Activated T-helper 1 cell treated with anti-CD3 and anti-CD28 coated beads, Interleukin-12 subunit alpha, Interleukin-12 subunit beta, Interleukin-2, Interleukin-4 antibody, amounts not matched to agents 30 ng/mL and 10 ng/mL and 1 ng/mL, durations not matched to agents 14 hours and 24 hours and 36 hours (primary cell): ENCODE measurements at regions of chr12 and their contacts with region 1.

Region 1: DNA sequence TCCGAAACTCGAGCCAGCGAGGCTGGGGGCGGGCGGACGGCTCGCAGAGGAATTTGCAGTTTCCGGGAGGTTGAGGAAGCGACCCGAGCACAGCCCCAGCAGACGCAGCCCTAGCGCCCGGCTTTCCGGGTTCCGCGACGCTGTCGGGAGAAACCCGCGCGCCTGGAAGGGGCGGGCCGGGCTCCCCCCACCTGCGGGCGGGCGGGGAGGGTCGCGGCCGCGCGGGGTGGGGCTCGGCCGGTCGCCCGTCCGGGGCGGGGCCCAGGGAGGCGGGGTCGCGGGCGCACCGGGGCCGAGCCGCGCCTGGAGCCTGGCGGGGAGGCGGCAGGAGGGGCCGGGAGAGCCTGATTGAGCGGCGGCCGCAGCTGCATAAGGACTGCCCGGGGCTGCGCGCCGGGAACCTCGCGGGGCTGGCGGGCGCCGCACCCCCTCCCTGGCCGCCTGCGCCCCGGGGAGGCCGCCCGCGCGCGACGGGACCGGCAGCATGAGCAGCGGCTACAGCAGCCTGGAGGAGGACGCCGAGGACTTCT is at the start of gene RASSF3:
- DNase-seq: peak; percentile 76
- H3K4me3 Mint-ChIP-seq: peak within 1 kb of the TSS; percentile 97
- H3K27ac Mint-ChIP-seq: peak within 1 kb of the TSS; percentile 98
- H3K4me1 Mint-ChIP-seq: peaks cover 47% of the 10 kb centered on the region
- H3K27me3 Mint-ChIP-seq: no peaks in the 10 kb centered on the region
- total RNA-seq, gene RASSF3: 37.1 and 38.3 TPM in 2 replicates

Region 2: GRCh38 chr12:64222009-64222765 is 388.0 kb before region 1 on chr12 and contains the start of gene KICS2:
- intact Hi-C with region 1: loop called (anchors 2 kb)
- DNase-seq: peak; percentile 88
- H3K4me3 Mint-ChIP-seq: peak within 1 kb of the TSS; percentile 100
- H3K27ac Mint-ChIP-seq: peak within 1 kb of the TSS; percentile 100
- H3K4me1 Mint-ChIP-seq: peaks cover 33% of the 10 kb centered on the region
- H3K27me3 Mint-ChIP-seq: peaks cover 14% of the 10 kb centered on the region
- total RNA-seq, gene KICS2: 12.7 and 14.9 TPM in 2 replicates

Region 3: GRCh38 chr12:64433915-64434314 is 176.3 kb before region 1 on chr12:
- intact Hi-C with region 1: no loop called
- DNase-seq: no peak
- H3K4me3 Mint-ChIP-seq: no peak overlapping the region
- H3K27ac Mint-ChIP-seq: no peak overlapping the region
- H3K4me1 Mint-ChIP-seq: no peaks in the 10 kb centered on the region
- H3K27me3 Mint-ChIP-seq: no peaks in the 10 kb centered on the region

Region 4: GRCh38 chr12:64451687-64452558 is 158.3 kb before region 1 on chr12 and contains the start of gene TBK1:
- intact Hi-C with region 1: loop called (anchors 2 kb)
- DNase-seq: peak; percentile 74
- H3K4me3 Mint-ChIP-seq: peak within 1 kb of the TSS; percentile 97
- H3K27ac Mint-ChIP-seq: peak within 1 kb of the TSS; percentile 94
- H3K4me1 Mint-ChIP-seq: peaks cover 47% of the 10 kb centered on the region
- H3K27me3 Mint-ChIP-seq: no peaks in the 10 kb centered on the region
- total RNA-seq, gene TBK1: 33.6 and 42.4 TPM in 2 replicates

Region 5: DNA sequence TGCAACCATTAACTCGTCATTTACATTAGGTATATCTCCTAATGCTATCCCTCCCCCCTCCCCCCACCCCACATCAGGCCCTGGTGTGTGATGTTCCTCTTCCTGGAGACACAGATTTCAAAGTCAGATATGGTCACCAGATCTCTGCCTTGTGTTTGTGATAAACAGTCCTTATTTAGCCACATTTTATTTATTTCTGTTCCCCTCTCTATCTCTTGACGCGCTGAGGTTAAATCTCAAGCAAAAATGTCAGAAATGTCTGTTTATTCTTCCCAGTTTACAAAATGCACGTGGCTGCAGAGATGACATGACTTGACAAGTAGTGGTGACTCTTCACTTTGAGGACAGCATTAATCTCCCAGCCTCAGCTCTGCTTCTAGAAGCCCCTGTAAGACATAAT is 11.4 kb before region 1 on chr12:
- intact Hi-C with region 1: loop called (anchors 1 kb)
- DNase-seq: no peak
- H3K4me3 Mint-ChIP-seq: no peak overlapping the region
- H3K27ac Mint-ChIP-seq: no peak overlapping the region
- H3K4me1 Mint-ChIP-seq: peaks cover 20% of the 10 kb centered on the region
- H3K27me3 Mint-ChIP-seq: peaks cover 8% of the 10 kb centered on the region

Region 6: GRCh38 chr12:64660237-64661018 is 50.2 kb after region 1 on chr12:
- intact Hi-C with region 1: loop called (anchors 2 kb)
- DNase-seq: no peak
- H3K4me3 Mint-ChIP-seq: no peak overlapping the region
- H3K27ac Mint-ChIP-seq: no peak overlapping the region
- H3K4me1 Mint-ChIP-seq: peaks cover 61% of the 10 kb centered on the region
- H3K27me3 Mint-ChIP-seq: no peaks in the 10 kb centered on the region

Region 7: DNA sequence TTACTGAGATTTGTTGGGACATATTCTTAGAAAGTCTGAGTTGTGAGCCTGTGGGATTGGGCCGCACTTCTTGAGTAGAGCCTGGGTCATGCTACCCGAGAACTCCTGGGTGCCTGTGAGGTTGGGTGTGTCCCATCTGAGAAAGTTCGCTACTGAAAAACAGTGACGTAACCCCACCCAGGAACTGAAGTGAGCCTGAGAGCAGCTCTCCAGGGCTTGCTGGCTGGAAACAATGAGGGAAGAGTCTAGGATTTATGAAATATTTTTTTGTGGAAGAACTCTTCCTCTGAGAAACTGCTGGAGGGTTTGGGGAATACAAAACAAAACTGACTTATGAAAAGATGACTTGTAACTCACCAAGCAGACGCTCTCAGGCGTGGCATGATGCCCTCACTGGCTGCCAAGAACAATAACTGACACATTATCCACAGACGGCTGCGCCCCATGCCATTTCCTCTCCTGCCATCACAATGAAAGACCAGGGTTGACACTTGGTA is 69.3 kb after region 1 on chr12:
- intact Hi-C with region 1: loop called (anchors 1 kb)
- DNase-seq: peak; percentile 51
- H3K4me3 Mint-ChIP-seq: peak overlapping the region; percentile 53
- H3K27ac Mint-ChIP-seq: peak overlapping the region; percentile 84
- H3K4me1 Mint-ChIP-seq: peaks cover 82% of the 10 kb centered on the region
- H3K27me3 Mint-ChIP-seq: no peaks in the 10 kb centered on the region

Region 8: DNA sequence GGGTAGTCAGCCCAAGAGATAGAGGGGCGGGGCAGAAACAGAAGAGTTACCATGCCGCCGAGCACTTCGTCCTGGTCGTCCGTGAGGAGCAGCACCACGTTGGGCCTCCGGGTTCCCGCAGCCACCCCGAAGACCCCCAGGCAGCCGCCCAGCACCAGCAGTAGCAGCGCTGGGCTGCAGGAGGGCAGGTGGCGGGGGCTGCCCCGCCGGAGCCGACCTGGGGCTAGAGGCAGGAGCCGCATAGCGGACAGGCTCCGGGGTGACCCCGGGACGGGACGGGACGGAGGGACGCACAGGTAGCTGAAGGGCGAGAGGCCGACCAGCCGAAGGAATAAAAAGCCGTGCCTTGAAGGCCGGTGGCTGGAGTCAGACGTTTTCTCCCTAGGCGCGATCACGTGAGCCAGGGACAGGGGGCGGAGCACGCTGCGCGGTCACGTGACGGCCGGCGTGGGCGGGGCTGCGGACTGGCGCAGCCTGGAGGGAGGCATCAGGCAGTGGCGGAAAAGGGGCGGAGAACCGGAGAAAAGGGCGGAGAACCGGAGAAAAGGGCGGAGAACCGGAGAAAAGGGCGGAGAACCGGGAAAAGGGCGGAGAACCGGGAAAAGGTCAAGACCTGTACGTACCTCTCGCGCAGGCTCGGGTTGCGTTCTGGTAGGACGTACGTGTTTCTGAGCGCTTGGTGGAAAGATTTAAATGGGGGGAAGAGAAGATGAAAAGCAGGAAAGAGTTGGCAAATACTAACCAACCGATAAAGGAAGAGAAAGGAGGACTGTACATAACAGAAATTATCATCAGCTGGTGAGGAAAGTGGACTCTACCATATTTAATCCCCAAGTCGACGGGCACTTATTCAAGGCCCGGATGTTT is 149.1 kb after region 1 on chr12 and contains the start of gene GNS:
- intact Hi-C with region 1: loop called (anchors 1 kb)
- DNase-seq: peak; percentile 95
- H3K4me3 Mint-ChIP-seq: peak within 1 kb of the TSS; percentile 91
- H3K27ac Mint-ChIP-seq: peak within 1 kb of the TSS; percentile 90
- H3K4me1 Mint-ChIP-seq: peaks cover 45% of the 10 kb centered on the region
- H3K27me3 Mint-ChIP-seq: peaks cover 2% of the 10 kb centered on the region
- total RNA-seq, gene GNS: 20.6 and 21.3 TPM in 2 replicates

Region 9: DNA sequence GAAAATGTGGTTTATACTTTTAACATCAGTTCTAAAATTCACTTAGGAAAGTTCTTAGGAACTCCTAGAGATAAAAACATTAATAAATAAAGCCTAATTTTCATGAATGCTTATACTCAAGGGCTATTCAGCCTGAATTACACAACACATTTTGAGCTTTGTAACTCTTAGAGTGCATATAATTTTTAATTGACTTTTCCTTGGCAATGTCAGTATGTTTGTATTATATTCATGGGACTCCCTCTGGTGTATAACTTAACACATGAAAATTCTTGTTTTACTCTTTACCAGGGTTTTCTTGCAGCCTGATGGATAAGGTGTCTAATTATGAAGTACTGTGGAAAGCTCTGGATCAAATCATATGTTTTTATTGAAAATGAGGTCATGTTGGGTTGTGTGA is 1063.5 kb after region 1 on chr12:
- intact Hi-C with region 1: no loop called
- DNase-seq: no peak
- H3K4me3 Mint-ChIP-seq: no peak overlapping the region
- H3K27ac Mint-ChIP-seq: no peak overlapping the region
- H3K4me1 Mint-ChIP-seq: no peaks in the 10 kb centered on the region
- H3K27me3 Mint-ChIP-seq: peaks cover 2% of the 10 kb centered on the region